Activated naive CD4-positive, alpha-beta T cell treated with anti-CD3 and anti-CD28 coated beads for 36 hours (primary cell): ENCODE measurements at regions of chr10 and their contacts with region 1.

Region 1: GRCh38 chr10:104121520-104122224 is at the start of gene SFR1:
- DNase-seq: peak; percentile 99
- H3K4me3 Mint-ChIP-seq: peak within 1 kb of the TSS; percentile 90
- H3K27ac Mint-ChIP-seq: peak within 1 kb of the TSS; percentile 97
- H3K4me1 Mint-ChIP-seq: peaks cover 38% of the 10 kb centered on the region
- H3K27me3 Mint-ChIP-seq: no peaks in the 10 kb centered on the region
- total RNA-seq, gene SFR1: 17.0 to 18.5 TPM

Region 2: DNA sequence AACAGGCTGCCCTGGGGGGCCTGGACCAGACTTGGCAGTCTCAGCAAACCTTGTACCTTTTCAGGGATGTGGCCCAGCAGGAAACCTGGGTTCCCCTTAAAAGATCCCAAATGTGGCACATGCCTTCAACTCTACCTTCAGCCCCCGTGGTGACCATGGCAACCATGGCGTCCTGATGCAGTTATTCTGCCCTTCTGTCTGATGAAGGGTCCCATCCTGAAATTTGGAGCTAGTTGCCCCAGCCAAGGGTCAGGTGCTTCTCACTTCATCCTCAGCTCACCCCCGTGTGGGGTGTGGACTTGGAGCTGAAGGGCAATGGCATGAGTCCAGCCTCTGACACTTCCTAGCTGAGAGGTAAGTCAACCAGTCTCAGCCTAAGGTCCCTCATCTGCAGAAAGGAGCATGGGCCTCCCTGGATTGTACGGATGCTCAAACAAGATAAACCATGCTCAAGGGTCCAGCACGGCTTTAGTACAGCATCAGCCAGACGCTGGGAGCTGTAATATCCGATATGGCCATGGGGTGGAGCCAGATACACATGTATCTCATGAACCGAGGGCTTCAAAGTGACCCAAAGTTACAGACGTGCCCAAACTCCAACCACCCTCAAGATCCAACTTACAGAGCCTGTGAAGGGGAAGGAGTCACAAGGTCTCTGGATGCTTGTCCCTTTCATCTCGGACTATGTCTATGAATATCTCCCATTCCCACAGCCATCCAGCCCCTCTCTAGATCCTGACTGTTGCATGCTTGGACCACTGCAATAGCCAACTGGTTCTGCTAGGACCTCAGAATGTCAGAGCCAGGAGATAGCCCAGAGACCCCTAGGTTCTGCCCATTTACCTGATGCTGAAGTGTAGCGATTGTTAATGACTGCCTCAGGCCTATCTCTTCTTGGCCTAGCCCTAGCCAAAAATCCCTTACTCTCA is 408.8 kb before region 1 on chr10:
- CTCF ChIA-PET with region 1: no interaction called
- intact Hi-C with region 1: loop called (anchors 5 kb)
- DNase-seq: peak; percentile 92
- H3K4me3 Mint-ChIP-seq: no peak overlapping the region
- H3K27ac Mint-ChIP-seq: no peak overlapping the region
- H3K4me1 Mint-ChIP-seq: no peaks in the 10 kb centered on the region
- H3K27me3 Mint-ChIP-seq: no peaks in the 10 kb centered on the region

Region 3: DNA sequence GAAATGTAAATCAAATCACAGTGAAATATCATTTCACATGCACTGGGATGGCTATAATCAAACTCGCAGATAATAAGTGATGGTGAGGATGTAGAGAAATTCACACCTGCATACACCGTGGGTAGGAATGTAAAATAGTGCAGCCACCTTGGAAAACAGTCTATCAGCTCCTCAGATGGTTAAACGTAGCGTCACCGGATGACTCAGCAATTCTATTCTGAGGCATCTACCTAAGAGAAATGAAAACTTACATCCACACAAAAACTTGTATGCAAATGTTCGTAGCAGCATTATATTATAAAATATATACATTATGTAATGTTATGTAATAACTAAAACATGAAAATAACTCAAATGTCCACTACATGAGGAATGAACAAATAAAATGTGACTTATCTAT is 305.2 kb before region 1 on chr10:
- CTCF ChIA-PET with region 1: no interaction called
- intact Hi-C with region 1: no loop called
- DNase-seq: peak; percentile 18
- H3K4me3 Mint-ChIP-seq: no peak overlapping the region
- H3K27ac Mint-ChIP-seq: no peak overlapping the region
- H3K4me1 Mint-ChIP-seq: peaks cover 3% of the 10 kb centered on the region
- H3K27me3 Mint-ChIP-seq: peaks cover 10% of the 10 kb centered on the region

Region 4: DNA sequence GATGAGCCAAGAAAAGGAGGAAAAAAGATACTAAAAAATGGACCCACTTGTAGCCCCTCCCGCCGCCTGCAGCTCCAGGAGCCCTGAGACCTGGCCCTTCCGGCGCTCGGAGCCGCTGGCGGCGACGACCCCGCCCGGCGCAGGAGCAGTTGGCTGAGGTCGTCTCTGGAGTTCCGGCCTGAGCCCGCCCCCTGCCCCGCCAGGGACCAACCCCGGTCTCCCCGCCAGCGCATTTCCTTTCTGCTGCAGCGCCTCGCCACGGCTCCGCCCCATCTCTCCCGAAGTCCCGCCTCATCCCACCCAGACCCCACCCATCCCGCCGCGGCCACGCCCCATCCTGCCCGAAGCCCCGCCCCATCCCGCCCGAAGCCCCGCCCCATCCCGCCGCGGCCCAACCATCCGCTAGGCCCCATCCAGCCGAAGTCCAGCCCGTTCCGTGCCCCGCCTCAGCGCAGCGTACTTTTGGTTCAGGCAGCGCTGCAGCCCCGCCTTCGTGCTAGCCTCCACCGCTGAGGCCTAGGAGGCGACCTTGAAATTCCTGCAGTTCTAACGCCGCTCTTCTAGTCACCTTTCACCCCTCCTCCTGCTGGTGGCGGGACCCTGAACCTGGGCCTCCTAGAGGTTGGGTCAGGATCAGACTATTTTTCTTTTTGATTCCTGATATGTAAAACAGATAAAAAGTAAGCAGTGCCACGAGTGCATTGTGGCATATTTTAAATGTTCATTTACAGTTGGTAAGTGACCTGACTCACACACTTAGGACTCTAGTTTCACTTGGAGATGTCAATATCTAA is 203.4 kb before region 1 on chr10 and contains the start of gene STN1:
- CTCF ChIA-PET with region 1: no interaction called
- intact Hi-C with region 1: loop called (anchors 1 kb)
- DNase-seq: peak; percentile 98
- H3K4me3 Mint-ChIP-seq: peak within 1 kb of the TSS; percentile 89
- H3K27ac Mint-ChIP-seq: peak within 1 kb of the TSS; percentile 94
- H3K4me1 Mint-ChIP-seq: peaks cover 29% of the 10 kb centered on the region
- H3K27me3 Mint-ChIP-seq: no peaks in the 10 kb centered on the region
- total RNA-seq, gene STN1: 53.3 to 54.8 TPM

Region 5: DNA sequence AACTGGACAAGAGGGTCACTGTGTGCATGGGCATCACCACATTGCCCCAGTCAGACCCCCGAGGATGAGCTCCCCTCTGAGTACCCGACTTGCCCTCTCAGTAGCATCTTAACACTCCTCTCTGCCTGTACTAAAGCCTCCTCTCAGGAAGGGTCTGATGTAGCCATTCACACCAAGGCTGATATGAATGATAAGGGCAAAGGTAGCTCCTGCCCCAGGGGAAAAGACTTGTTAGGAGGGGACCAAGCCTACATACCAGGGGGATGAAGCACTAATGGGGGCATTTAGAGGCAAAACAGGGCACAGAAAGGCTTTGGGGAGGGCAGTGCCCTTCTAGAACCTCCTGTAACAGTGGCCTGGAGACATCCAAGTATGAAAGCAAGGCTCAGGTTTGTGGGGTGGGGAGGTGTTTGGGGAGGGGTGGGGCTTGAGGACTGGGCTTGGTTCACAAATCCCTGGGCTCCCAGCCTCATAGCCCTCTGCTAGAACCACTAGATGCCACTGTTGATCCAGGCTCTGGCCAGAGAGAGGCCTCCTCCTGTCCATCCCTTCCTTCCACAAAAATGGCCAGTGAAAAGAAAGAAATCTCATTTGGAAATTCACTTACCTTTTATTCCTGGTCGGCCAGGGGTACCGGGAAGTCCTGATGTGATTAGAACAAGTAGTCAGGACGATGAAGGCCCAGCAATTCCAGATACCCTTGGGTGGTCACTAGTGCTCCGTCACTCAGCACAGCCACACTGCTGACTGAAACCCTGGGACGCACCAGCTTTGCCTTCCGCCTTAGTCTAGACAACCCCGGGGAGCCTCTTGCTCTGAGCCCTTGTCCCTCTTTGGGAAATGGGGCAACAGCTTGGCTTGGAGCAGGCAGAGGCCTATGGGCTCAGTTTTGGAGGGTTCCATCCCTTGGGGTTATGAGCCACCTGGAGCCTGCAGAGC is 76.3 kb before region 1 on chr10:
- CTCF ChIA-PET with region 1: interaction called, 5 read pairs
- intact Hi-C with region 1: loop called (anchors 1 kb)
- DNase-seq: peak; percentile 37
- H3K4me3 Mint-ChIP-seq: no peak overlapping the region
- H3K27ac Mint-ChIP-seq: no peak overlapping the region
- H3K4me1 Mint-ChIP-seq: no peaks in the 10 kb centered on the region
- H3K27me3 Mint-ChIP-seq: no peaks in the 10 kb centered on the region

Region 6: GRCh38 chr10:104109908-104110662 is 11.6 kb before region 1 on chr10:
- CTCF ChIA-PET with region 1: interaction called, 3 read pairs
- intact Hi-C with region 1: loop called (anchors 1 kb)
- DNase-seq: no peak
- H3K4me3 Mint-ChIP-seq: no peak overlapping the region
- H3K27ac Mint-ChIP-seq: peak overlapping the region; percentile 39
- H3K4me1 Mint-ChIP-seq: peaks cover 9% of the 10 kb centered on the region
- H3K27me3 Mint-ChIP-seq: no peaks in the 10 kb centered on the region

Region 7: GRCh38 chr10:104274762-104275721 is 153.4 kb after region 1 on chr10:
- CTCF ChIA-PET with region 1: interaction called, 10 read pairs
- intact Hi-C with region 1: no loop called
- DNase-seq: peak; percentile 63
- H3K4me3 Mint-ChIP-seq: peak overlapping the region; percentile 65
- H3K27ac Mint-ChIP-seq: no peak overlapping the region
- H3K4me1 Mint-ChIP-seq: peaks cover 6% of the 10 kb centered on the region
- H3K27me3 Mint-ChIP-seq: peaks cover 9% of the 10 kb centered on the region